Calu3 (cell line): ENCODE measurements at regions of chr12 and their contacts with region 1.

Region 1: GRCh38 chr12:54759751-54760150 is 94.6 kb upstream of the MUCL1 start:
- DNase-seq: peak; percentile 50
- H3K4me3 Mint-ChIP-seq: no peak overlapping the region
- H3K27ac Mint-ChIP-seq: no peak overlapping the region
- H3K4me1 Mint-ChIP-seq: no peaks in the 10 kb centered on the region
- H3K27me3 Mint-ChIP-seq: peaks cover 16% of the 10 kb centered on the region
- CTCF ChIP-seq: peak; percentile 18

Region 2: DNA sequence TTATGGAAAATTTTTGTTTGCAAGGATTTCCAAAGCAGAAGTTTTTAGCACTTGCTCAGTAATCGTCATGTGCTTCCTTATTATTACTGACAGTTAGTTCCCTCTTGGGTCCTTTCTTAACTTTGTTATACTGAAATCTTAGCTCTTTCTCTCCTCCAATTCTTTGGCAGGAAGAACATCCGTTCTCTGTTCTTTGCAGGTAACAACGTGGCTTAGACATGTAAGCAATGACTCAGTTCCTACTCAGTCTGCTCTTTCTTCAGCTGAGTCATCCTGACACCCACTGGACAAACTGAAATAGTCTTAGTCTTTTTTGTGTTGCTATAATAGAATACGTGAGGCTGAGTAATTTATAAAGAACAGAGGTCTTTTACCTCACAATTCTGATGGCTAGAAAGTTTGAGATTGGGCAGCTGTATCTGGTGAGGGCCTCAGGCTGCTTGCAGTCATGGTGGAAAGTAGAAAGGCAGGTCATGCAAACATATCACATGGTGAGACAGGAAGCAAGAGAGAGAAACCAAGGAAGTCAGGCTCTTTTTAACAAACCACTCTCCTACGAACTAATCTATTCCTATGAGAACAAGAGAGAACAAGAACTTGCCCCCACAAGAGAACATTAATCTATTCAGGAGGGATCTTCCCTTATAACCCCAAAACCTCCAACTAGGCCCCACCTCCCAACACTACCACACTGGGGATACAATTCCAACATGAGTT is 175.6 kb after region 1 on chr12:
- CTCF ChIA-PET with region 1: no interaction called
- intact Hi-C with region 1: loop called (anchors 5 kb)
- DNase-seq: peak; percentile 42
- H3K4me3 Mint-ChIP-seq: peak overlapping the region; percentile 3
- H3K27ac Mint-ChIP-seq: peak overlapping the region; percentile 87
- H3K4me1 Mint-ChIP-seq: peaks cover 38% of the 10 kb centered on the region
- H3K27me3 Mint-ChIP-seq: no peaks in the 10 kb centered on the region
- CTCF ChIP-seq: no peak